Breast epithelium (tissue), 4 donors: ENCODE measurements at regions of chr5 and their contacts with region 1.

Region 1: DNA sequence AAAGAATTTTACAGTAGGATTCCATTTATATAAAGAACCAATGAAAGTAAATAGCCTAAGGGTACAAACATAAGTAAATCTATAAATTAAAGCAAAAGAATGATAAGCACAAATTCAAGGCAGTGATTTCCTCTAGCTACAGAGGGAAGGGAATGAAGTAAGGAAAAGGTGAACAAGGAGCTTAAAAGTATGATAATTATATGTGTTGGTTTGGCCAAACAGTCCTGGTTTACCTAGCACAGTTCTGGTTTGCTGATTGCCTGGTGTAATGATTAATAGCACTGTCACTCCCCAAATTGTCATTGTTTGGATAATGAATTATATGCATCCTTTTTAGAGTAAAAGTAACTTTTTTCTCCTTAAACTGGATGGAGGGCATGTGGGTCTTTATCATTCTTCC is 15.0 kb upstream of the TMEM161B start:
- DNase-seq: no peak
- H3K4me3 ChIP-seq: no peak overlapping the region
- H3K27ac ChIP-seq: no peak overlapping the region
- H3K4me1 ChIP-seq: no peaks in the 10 kb centered on the region
- H3K27me3 ChIP-seq: no peaks in the 10 kb centered on the region
- CTCF ChIP-seq: no peak
- POLR2A ChIP-seq: no peak

Region 2: GRCh38 chr5:88256872-88257271 is 26.8 kb before region 1 on chr5:
- intact Hi-C with region 1: loop called (anchors 2 kb)
- DNase-seq: no peak
- H3K4me3 ChIP-seq: no peak overlapping the region
- H3K27ac ChIP-seq: no peak overlapping the region
- H3K4me1 ChIP-seq: no peaks in the 10 kb centered on the region
- H3K27me3 ChIP-seq: no peaks in the 10 kb centered on the region
- CTCF ChIP-seq: no peak
- POLR2A ChIP-seq: no peak